ENCODE measurements at regions of chr7 and their contacts with region 1.

Region 1: GRCh38 chr7:26187380-26188205 is 13.0 kb downstream of the HNRNPA2B1 start:
- DNase-seq: peak in 2 of 4 experiments; percentile 27 to 60
- ATAC-seq: peak; percentile 50
- H3K4me3 ChIP-seq: no peak overlapping the region
- H3K27ac ChIP-seq: peak overlapping the region; percentile 61
- H3K4me1 ChIP-seq: peaks cover 7 to 29% of the 10 kb centered on the region in 2 experiments; a peak in 4 of 5 replicates
- H3K27me3 ChIP-seq: no peaks in the 10 kb centered on the region
- CTCF ChIP-seq: no peak
- EP300 ChIP-seq: no peak
- POLR2A ChIP-seq: peak; percentile 86
- RAD21 ChIP-seq: no peak; a peak in 1 of 4 replicates

Region 2: DNA sequence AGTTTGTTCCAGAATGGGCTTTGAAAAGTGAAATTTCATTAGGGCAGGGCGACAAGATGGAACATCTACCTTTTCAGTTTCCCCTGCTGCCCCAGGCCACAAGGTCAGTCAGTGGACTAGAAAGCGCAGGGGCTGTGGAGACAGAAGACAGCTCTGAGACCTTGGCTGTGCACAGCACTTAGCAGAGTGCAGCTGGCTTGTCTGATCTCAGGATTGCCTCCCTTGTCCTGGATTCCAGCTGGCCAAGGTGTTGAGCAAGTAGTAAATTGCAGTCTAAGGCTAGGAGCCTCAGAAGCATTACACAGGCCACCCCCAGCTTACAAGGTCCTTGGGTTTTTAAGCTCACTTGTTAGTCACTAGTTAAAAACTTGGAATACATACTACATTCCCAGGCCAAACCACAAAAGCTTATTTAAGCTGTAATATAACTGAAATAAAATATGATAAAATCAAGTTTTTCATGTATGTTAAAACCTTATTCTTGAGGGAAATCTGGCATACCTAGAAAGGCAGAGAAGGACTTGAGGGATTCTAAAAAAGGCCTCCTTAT is 1970.9 kb before region 1 on chr7:
- CTCF ChIA-PET with region 1: no interaction called
- POLR2A ChIA-PET with region 1: no interaction called
- in situ Hi-C with region 1: no loop called
- intact Hi-C with region 1: no loop called
- DNase-seq: no peak
- ATAC-seq: no peak
- H3K4me3 ChIP-seq: no peak overlapping the region
- H3K27ac ChIP-seq: no peak overlapping the region
- H3K4me1 ChIP-seq: no peaks in the 10 kb centered on the region
- H3K27me3 ChIP-seq: peaks cover 2 to 4% of the 10 kb centered on the region in 2 experiments; a peak in 4 of 5 replicates
- CTCF ChIP-seq: no peak
- EP300 ChIP-seq: no peak
- POLR2A ChIP-seq: no peak
- RAD21 ChIP-seq: no peak

Region 3: DNA sequence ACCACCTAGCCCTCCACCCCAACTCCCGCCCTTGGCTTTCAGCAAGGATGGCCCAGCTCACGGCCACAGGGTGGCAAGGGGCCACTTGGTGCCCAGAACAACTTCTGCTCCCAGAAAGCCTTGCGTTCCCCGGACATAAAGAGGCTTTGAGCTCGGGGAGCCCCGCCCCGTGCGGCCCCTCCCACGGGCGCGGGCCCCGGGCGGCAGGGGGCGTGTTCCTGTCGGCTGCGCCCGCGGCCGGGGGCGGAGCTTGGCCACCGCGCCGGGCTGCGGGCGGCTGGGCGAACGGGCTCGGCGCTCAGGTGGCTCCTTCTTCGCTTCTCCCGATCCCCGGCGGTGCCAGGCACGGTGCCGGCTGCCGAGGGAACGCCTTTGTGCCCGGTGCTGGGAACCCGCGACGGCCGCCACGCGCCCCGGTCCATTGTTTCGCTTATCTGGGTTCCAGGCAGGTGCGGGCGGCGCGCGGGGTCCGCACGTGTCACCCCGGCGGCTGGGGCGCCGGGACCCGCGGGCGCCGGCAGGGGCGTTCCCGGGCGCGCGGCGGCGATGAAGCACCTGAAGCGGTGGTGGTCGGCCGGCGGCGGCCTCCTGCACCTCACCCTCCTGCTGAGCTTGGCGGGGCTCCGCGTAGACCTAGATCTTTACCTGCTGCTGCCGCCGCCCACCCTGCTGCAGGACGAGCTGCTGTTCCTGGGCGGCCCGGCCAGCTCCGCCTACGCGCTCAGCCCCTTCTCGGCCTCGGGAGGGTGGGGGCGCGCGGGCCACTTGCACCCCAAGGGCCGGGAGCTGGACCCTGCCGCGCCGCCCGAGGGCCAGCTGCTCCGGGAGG is 35.4 kb before region 1 on chr7 and contains the start of gene NFE2L3:
- CTCF ChIA-PET with region 1: no interaction called
- POLR2A ChIA-PET with region 1: interaction called, 27 read pairs
- in situ Hi-C with region 1: no loop called
- intact Hi-C with region 1: loop called (anchors 2 kb)
- DNase-seq: peak; percentile 91 to 96 (median 94)
- ATAC-seq: peak; percentile 90
- H3K4me3 ChIP-seq: peak within 1 kb of the TSS; percentile 75
- H3K27ac ChIP-seq: peak within 1 kb of the TSS; percentile 62; the same call in 2 of the 3 replicates
- H3K4me1 ChIP-seq: peaks cover 31 to 38% of the 10 kb centered on the region in 2 experiments
- H3K27me3 ChIP-seq: no peaks in the 10 kb centered on the region
- CTCF ChIP-seq: peak in 2 of 3 experiments; percentile 13 to 17; a peak in 1 of 6 replicates
- EP300 ChIP-seq: no peak
- POLR2A ChIP-seq: peak; percentile 69
- RAD21 ChIP-seq: no peak
- polyA plus RNA-seq, gene NFE2L3: 2.9 to 4.8 TPM

Region 4: DNA sequence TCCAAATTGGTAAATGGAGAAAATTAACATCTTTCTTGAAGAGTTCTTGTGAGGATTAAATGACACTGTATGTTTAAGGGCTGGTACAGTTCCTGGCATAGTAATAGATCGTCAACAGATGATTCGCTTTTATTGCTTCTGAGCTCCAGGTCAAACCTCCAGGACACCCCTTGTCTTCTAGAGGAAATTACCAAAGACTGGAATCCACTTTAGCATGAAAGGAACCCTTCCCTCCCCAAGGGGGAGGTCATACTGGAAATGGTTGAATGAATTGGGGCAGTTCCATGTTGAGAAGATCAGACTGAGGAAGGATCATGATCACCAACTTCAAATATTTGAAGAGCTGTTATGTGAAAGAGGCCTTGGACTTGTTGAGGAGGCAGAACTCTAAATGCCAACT is 26.7 kb before region 1 on chr7:
- CTCF ChIA-PET with region 1: no interaction called
- POLR2A ChIA-PET with region 1: interaction called, 27 read pairs
- in situ Hi-C with region 1: no loop called
- intact Hi-C with region 1: no loop called
- DNase-seq: no peak
- ATAC-seq: no peak
- H3K4me3 ChIP-seq: no peak overlapping the region
- H3K27ac ChIP-seq: no peak overlapping the region
- H3K4me1 ChIP-seq: peaks cover 10 to 21% of the 10 kb centered on the region in 2 experiments; a peak in 4 of 5 replicates
- H3K27me3 ChIP-seq: no peaks in the 10 kb centered on the region
- CTCF ChIP-seq: no peak
- EP300 ChIP-seq: no peak
- POLR2A ChIP-seq: no peak
- RAD21 ChIP-seq: no peak

Region 5: DNA sequence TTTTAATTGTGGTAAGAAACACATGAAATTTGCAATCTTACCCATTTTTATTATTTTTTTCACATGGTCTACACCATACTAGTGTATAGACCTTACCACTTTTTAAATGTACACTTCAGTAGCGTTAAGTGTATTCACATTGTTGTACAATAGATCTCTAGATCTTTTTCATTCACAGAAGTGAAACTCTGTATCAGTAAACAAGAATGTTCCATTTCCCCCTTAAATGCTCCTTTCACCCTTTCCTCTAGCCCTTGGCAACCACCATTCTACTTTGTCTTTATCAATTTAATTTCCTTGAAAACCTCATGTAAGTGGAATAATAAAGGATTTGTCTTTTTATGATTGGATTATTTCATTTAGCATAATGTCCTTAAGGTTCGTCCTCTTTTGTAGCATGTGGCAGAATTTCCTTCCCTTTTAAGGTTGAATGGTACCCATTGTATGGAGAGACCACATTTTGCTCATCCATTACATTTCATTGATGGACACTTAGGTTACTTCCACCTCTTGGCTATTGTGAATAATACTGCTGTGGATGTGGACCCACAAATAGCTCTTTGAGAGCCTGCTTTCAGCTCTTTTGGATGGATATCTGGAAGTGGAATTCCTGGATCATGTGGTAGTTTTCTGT is 149.8 kb after region 1 on chr7:
- CTCF ChIA-PET with region 1: no interaction called
- POLR2A ChIA-PET with region 1: no interaction called
- in situ Hi-C with region 1: no loop called
- intact Hi-C with region 1: no loop called
- DNase-seq: no peak
- ATAC-seq: no peak
- H3K4me3 ChIP-seq: no peak overlapping the region
- H3K27ac ChIP-seq: no peak overlapping the region
- H3K4me1 ChIP-seq: no peaks in the 10 kb centered on the region
- H3K27me3 ChIP-seq: no peaks in the 10 kb centered on the region
- CTCF ChIP-seq: no peak
- EP300 ChIP-seq: no peak
- POLR2A ChIP-seq: no peak
- RAD21 ChIP-seq: no peak

Measured in K562 (cell line).